Left cardiac atrium (tissue), 4 donors: ENCODE measurements at regions of chr1 and their contacts with region 1.

Region 1: DNA sequence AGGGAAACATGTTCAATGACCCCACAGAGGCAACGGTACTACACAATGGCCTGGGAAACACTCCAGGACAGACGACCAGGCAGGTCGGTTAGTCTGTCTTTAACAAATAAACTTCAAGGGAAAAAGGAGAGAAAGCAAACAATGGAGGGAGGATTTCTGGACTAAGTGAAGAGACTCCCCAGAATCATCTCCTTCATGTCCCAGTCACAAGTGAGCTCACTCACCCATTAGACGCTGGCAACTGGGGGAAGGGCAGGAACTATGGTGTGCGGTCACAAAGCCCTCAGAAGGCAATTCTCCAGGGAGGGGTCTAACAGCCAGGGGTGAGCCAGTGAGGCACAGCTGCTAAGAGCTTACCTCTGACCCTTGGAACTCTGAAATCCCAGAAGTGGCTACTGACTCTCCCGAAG is 55.7 kb upstream of the NADK start:
- DNase-seq: no peak
- ATAC-seq: peak in 1 of 2 donors; percentile 15

Region 2: GRCh38 chr1:1873186-1873585 is 39.3 kb after region 1 on chr1:
- intact Hi-C with region 1: no loop called
- DNase-seq: peak; percentile 66
- ATAC-seq: peak; percentile 89 to 94

Region 3: DNA sequence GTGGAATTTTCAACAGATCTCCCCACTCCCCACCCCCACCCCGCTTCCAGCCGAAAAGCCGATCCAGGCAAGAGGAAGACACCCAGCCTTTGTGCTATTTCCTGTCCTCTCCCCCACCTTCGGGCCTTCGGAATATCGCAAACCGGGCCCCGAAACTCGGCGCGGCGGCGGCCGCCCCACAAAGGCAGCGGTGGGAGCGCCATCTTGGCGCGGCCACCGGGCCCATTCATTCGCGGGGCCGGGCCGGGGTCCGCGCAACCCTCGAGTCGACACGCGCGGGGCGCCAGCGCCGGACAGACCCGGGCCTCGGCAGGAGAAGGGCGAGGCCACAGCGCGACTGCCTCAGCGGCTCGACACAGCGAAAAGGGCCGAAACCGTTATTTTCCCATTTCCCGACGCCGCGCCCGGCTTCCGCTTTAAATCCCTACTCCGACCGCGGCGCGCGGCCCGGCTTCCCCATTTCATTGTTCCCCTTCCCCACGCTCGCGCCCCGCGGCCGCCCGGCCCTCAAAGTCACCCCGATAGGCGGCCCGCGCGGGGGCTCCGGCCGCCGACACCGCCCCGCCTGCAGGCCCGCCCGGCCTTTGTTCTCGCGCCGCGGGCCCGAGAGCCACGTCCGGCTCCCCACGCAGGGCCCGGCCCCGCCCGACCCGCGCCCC is 56.1 kb after region 1 on chr1:
- intact Hi-C with region 1: loop called in 1 of 2 experiments (anchors 10 kb)
- DNase-seq: peak; percentile 71
- ATAC-seq: peak; percentile 10 to 18